ENCODE measurements at regions of chr15 and their contacts with region 1.

Region 1: GRCh38 chr15:57861036-57861638 is 154.6 kb downstream of the POLR2M start:
- DNase-seq: peak; percentile 32
- ATAC-seq: peak; percentile 60; the same call in 1 of the 2 replicates
- H3K4me3 ChIP-seq: no peak overlapping the region
- H3K27ac ChIP-seq: no peak overlapping the region
- H3K4me1 ChIP-seq: no peaks in the 10 kb centered on the region
- H3K27me3 ChIP-seq: peaks cover 6% of the 10 kb centered on the region
- CTCF ChIP-seq: peak; percentile 73; the same call in 1 of the 2 replicates

Region 2: DNA sequence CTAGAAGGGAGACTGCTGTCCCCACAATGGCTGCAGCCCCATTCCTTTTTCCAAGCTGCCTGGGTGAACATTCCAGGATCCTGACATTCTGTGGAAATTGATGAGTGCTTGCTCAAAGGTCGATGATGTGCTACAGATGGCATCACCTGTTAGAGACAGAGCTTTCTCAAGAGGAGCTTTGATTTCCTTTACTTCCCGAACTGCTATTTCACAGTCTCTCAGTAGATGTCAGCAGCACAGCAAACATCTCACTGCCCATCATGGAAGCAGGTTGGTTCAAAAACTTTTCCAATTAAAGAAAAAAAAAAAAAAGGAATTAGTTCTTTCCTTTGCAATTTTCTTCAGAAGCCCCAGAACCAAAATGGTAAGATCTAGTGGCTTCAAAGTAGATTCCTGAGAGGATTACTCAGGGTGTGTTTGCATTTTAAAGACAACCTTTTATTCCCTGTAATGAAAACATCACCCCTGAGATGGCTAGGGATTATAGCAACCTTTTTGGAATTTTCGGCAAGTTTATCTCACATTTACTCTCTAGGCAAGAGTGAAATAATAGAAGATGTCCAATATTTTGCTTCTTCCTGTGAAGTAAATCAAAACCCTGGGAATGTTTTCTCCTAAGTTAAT is 109.8 kb before region 1 on chr15:
- CTCF ChIA-PET with region 1: interaction called, 32 read pairs
- POLR2A ChIA-PET with region 1: no interaction called
- in situ Hi-C with region 1: no loop called
- intact Hi-C with region 1: loop called (anchors 2 kb)
- DNase-seq: no peak
- ATAC-seq: no peak
- H3K4me3 ChIP-seq: no peak overlapping the region
- H3K27ac ChIP-seq: no peak overlapping the region
- H3K4me1 ChIP-seq: no peaks in the 10 kb centered on the region
- H3K27me3 ChIP-seq: 0 out of 2 replicates have a peak, but pooled peaks cover 3% of the 10 kb centered on the region
- CTCF ChIP-seq: peak; percentile 69